Activated CD8-positive, alpha-beta T cell treated with anti-CD3 and anti-CD28 coated beads, Interleukin-2, amount 10 ng/mL, durations not matched to agents 7 days and 5 days (primary cell): ENCODE measurements at regions of chr11 and their contacts with region 1.

Region 1: GRCh38 chr11:35165423-35166368 is 26.7 kb downstream of the CD44 start:
- DNase-seq: peak; percentile 97
- ATAC-seq: peak; percentile 68
- H3K4me3 Mint-ChIP-seq: peak overlapping the region; percentile 68
- H3K27ac Mint-ChIP-seq: peak overlapping the region; percentile 99
- H3K4me1 Mint-ChIP-seq: peaks cover 99% of the 10 kb centered on the region
- H3K27me3 Mint-ChIP-seq: no peaks in the 10 kb centered on the region

Region 2: GRCh38 chr11:35006389-35007128 is 159.1 kb before region 1 on chr11:
- CTCF ChIA-PET with region 1: interaction called, 43 read pairs
- POLR2A ChIA-PET with region 1: no interaction called
- DNase-seq: peak; percentile 56
- ATAC-seq: peak; percentile 80
- H3K4me3 Mint-ChIP-seq: peak overlapping the region; percentile 26
- H3K27ac Mint-ChIP-seq: peak overlapping the region; percentile 33
- H3K4me1 Mint-ChIP-seq: peaks cover 56% of the 10 kb centered on the region
- H3K27me3 Mint-ChIP-seq: peaks cover 5% of the 10 kb centered on the region

Region 3: GRCh38 chr11:35144136-35144741 is 21.5 kb before region 1 on chr11:
- CTCF ChIA-PET with region 1: interaction called, 218 read pairs
- POLR2A ChIA-PET with region 1: interaction called, 47 read pairs
- DNase-seq: peak; percentile 81
- ATAC-seq: peak; percentile 31
- H3K4me3 Mint-ChIP-seq: peak overlapping the region; percentile 73
- H3K27ac Mint-ChIP-seq: peak overlapping the region; percentile 91
- H3K4me1 Mint-ChIP-seq: peaks cover 76% of the 10 kb centered on the region
- H3K27me3 Mint-ChIP-seq: no peaks in the 10 kb centered on the region

Region 4: DNA sequence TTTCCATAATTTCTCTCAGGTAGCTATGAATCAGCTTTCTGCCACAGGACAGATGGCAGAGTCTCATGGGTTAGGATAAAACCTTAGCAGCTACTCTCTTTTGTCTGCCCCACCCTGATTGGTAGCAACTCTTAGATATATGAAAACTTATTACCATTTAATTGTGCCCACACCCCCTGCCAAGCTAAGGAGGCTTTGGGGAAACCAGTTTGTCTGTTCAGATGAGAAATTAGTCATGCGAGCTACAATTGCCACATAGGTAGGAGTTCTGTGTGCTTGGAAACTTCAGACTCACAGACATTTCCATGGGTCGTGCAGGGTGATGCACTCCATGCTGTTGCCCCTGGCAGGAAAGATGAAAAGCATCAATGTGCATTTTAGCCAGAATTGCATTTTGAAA is 13.2 kb after region 1 on chr11:
- CTCF ChIA-PET with region 1: interaction called, 48 read pairs
- POLR2A ChIA-PET with region 1: interaction called, 61 read pairs
- DNase-seq: no peak
- ATAC-seq: no peak
- H3K4me3 Mint-ChIP-seq: no peak overlapping the region
- H3K27ac Mint-ChIP-seq: peak overlapping the region; percentile 89
- H3K4me1 Mint-ChIP-seq: peaks cover 90% of the 10 kb centered on the region
- H3K27me3 Mint-ChIP-seq: no peaks in the 10 kb centered on the region

Region 5: DNA sequence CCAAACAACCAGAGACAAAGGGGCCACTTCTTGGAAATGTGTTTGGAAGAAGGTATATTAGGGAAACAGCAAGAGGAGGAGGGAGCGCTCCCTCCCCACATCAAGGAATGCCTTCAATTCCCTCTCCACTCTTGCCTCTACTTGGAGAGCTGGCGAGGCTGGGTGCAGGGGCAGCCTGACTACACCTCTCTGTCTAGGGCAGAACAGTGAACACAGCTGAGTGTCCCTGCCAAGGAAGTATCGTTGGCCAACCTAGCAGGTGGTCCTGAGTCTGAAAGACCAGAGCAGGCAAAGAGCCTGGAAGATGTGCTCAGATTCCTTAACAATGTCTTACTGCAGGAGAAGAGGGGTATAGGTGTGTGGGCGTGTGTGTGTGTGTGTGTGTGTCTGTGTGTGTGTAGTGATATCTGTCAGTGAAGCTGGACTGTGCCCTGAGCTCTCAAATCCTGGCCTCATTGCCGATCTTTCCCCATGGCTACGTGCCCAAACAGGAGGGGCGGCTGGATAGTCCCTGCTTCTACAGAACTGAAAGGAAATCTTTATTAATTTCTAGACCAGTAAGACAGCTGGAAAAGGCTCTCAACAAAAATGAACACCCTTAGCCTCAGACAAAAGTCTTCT is 312.9 kb after region 1 on chr11:
- CTCF ChIA-PET with region 1: no interaction called
- POLR2A ChIA-PET with region 1: no interaction called
- DNase-seq: no peak
- ATAC-seq: no peak
- H3K4me3 Mint-ChIP-seq: no peak overlapping the region
- H3K27ac Mint-ChIP-seq: no peak overlapping the region
- H3K4me1 Mint-ChIP-seq: no peaks in the 10 kb centered on the region
- H3K27me3 Mint-ChIP-seq: peaks cover 17% of the 10 kb centered on the region